SK-N-SH (cell line): ENCODE measurements at regions of chr1 and their contacts with region 1.

Region 1: GRCh38 chr1:22673486-22674409 is 20.7 kb downstream of the C1QB start:
- DNase-seq: peak; percentile 87
- H3K4me3 ChIP-seq: no peak overlapping the region; a peak in 1 of 4 replicates
- H3K27ac ChIP-seq: no peak overlapping the region
- H3K4me1 ChIP-seq: no peaks in the 10 kb centered on the region; a peak in 1 of 4 replicates
- H3K27me3 ChIP-seq: peaks cover 12% of the 10 kb centered on the region; the same call in 1 of the 2 replicates
- CTCF ChIP-seq: peak; percentile 95
- EP300 ChIP-seq: no peak
- RAD21 ChIP-seq: peak; percentile 94

Region 2: DNA sequence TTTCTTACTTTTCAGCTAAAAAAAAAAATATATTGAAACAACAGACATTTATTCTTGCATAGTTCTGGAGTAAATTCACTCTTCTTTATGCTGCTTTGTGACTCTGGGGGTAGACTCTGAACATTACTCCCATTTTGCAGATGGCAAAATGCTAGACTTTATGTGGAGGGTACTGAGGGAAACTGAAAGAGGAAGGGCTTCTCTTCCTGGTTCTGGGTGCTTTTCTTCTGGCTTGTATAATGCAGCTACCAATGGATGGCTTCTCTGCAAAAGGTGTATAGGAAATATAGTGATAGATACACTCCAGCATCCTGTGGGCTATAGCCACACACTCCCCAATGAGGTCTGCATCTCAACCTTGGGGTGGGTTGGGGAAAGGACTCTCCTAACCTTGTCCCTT is 241.8 kb before region 1 on chr1:
- CTCF ChIA-PET with region 1: no interaction called
- POLR2A ChIA-PET with region 1: no interaction called
- DNase-seq: no peak
- H3K4me3 ChIP-seq: no peak overlapping the region
- H3K27ac ChIP-seq: no peak overlapping the region
- H3K4me1 ChIP-seq: no peaks in the 10 kb centered on the region
- H3K27me3 ChIP-seq: 0 out of 2 replicates have a peak, but pooled peaks cover 5% of the 10 kb centered on the region
- CTCF ChIP-seq: no peak
- EP300 ChIP-seq: no peak
- RAD21 ChIP-seq: no peak

Region 3: DNA sequence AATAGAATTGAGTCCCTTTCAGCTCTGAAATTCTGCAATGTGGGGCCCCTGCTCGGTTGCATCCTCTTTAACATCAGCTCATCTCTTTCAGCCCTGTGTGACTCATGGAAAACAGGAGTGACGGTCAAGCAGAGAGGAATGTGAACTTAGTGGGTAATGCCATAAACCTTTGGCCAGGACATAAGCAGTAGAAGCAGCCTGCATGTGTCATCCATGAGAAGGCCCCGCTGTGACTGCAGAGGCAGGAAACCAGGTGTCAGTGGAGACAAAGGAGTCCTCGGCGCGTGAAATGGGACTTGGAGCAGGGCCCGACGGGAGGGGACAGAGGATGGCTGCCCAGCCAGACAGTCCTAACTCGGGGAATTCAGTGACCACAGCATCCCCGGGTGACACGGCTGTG is 15.8 kb after region 1 on chr1:
- CTCF ChIA-PET with region 1: interaction called, 10 read pairs
- POLR2A ChIA-PET with region 1: no interaction called
- DNase-seq: no peak
- H3K4me3 ChIP-seq: no peak overlapping the region
- H3K27ac ChIP-seq: peak overlapping the region in 1 of 2 experiments; percentile 74; a peak in 2 of 4 replicates
- H3K4me1 ChIP-seq: peaks cover 6 to 8% of the 10 kb centered on the region in 2 experiments; a peak in 3 of 4 replicates
- H3K27me3 ChIP-seq: no peaks in the 10 kb centered on the region
- CTCF ChIP-seq: no peak
- EP300 ChIP-seq: peak in 1 of 2 experiments; percentile 70; a peak in 1 of 4 replicates
- RAD21 ChIP-seq: no peak

Region 4: DNA sequence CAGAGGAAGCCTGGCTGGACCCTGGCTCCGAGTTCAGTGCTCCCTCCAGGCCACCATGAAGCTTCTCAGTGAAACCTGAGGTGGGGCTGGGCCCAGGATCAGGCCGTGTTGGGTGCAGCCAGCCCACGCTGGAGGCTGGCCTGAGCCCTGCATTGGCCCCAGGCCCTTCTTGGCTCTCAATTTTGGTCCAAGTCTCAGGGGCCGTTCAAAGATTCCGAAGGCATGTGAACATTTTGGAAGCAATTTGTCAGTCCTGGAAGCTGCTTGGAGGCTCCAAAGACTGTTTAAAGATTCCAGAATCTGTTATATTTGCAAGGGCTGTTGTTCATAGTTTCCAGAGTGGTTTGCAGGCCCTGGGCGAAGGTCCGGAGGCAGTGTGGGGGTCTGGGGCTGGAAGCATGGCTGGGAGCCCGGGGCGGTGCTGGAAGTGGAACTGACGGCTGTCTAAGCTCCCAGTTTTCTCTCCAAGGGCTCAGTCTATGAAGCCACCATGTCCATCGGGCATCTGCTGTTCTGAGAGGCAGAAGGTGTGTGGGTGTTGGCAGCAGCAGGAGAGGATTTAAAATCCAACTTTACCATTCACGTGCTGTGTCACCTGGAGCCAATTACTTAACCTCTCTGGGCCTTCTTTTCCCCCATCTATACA is 141.8 kb after region 1 on chr1:
- CTCF ChIA-PET with region 1: no interaction called
- POLR2A ChIA-PET with region 1: no interaction called
- DNase-seq: no peak
- H3K4me3 ChIP-seq: no peak overlapping the region
- H3K27ac ChIP-seq: no peak overlapping the region; a peak in 1 of 4 replicates
- H3K4me1 ChIP-seq: peaks cover 0 to 53% of the 10 kb centered on the region in 2 experiments; a peak in 1 of 4 replicates
- H3K27me3 ChIP-seq: no peaks in the 10 kb centered on the region
- CTCF ChIP-seq: no peak
- EP300 ChIP-seq: no peak
- RAD21 ChIP-seq: no peak

Region 5: DNA sequence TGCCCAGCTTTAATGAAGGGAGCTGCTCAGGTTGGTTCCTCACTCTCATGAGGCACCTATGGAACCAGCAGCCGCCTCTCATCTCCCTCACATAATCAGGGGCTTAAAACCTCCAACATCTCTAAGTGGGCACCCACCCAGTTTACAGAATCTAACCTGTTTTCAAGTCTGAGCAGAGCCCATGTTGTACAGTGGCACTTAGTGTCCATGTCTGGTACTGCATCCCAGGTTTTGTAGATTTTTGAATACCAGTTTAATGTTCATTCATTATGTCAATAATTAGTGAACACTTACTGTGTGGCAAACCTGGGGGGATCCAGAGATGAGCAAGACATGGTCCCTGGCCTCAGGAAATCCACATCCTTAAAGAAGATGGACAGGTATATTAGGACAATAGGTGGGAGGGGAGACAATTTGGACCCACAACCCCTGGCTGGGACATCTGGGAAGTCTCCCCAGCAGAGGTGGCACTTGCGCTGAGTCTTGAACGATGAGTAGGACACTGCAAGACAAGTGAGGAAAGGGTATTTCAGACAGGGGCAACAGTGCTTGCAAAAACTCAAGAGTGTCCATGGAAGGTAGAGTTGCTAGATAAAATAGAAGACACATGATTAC is 215.6 kb after region 1 on chr1:
- CTCF ChIA-PET with region 1: interaction called, 18 read pairs
- POLR2A ChIA-PET with region 1: no interaction called
- DNase-seq: peak; percentile 75
- H3K4me3 ChIP-seq: no peak overlapping the region
- H3K27ac ChIP-seq: peak overlapping the region in 1 of 2 experiments; percentile 29; a peak in 1 of 4 replicates
- H3K4me1 ChIP-seq: peaks cover 0 to 9% of the 10 kb centered on the region in 2 experiments; a peak in 1 of 4 replicates
- H3K27me3 ChIP-seq: no peaks in the 10 kb centered on the region
- CTCF ChIP-seq: peak; percentile 84
- EP300 ChIP-seq: no peak
- RAD21 ChIP-seq: peak; percentile 85

Region 6: DNA sequence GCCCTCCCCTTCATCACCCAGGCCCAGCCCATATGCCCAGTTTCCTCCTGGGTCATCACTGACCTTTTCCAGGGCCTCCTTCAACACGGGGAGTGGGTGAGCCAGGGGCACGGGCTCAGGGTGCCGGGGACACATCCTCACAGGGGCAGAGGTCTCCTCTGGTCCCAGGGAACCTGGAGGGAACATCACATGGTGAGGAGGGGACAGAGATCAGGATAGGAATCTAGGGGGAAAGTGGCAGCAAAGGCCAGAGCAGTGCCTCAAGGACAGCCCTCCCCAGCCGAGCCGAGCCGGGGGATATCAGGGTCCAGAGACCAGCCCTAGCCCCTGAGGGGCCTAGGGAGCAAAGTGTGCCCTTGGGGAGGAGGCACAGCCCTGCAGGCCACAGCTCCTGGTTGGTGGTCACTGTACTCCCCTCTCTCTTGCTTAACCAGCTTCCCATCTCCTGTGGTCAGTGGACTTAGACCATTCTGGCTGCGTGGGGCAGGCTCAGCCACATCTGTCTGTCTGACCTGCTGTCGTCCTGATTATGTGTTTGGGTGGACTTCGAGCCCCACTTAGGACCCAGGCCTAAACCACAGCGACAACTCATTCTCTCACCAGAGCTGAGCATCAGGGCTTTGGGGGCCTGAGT is 289.4 kb after region 1 on chr1:
- CTCF ChIA-PET with region 1: interaction called, 20 read pairs
- POLR2A ChIA-PET with region 1: no interaction called
- DNase-seq: no peak
- H3K4me3 ChIP-seq: no peak overlapping the region
- H3K27ac ChIP-seq: no peak overlapping the region
- H3K4me1 ChIP-seq: no peaks in the 10 kb centered on the region
- H3K27me3 ChIP-seq: no peaks in the 10 kb centered on the region
- CTCF ChIP-seq: no peak
- EP300 ChIP-seq: no peak
- RAD21 ChIP-seq: no peak

Region 7: DNA sequence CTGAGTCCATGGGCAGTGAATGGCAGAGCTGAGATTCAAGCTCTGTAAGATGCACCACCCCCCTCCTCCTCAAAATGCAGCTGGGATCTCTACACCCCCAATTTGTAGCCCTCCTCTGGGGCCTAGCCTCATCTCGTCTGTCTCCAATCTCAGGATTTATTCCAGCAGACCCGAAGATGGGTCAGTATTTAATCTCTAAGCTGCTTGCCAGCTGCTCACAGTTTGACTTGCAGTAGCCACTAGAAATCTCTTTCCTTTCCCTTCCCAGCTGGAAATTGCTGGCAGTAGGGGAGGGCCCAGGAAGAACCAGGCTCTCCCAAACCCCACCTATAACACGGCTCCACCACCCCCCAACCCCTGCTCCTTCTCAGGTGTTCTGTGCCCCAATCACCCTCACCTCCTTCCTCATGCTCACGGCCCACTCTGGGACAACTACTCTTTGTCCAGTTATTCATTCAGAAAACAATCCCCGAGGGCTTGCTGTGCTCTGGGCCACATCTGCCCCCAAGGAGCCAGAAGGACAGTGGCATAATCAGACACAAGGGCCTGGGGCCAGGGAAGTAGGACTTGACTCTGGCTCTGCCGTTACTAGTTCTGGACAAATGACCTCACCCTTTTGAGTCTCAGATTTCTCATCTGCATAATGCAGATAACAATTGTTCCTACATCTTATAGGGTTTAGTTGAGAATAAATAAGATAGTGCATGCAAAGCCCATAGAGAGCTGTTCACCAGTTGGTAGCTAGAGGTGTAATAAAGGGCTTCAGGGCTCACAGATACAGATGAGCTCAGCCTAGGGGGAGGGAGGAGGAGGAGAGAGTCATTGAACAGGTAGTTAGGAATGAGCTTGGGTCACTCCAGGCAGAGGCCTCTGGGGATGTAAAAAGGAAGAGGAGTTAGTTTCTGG is 297.7 kb after region 1 on chr1:
- CTCF ChIA-PET with region 1: interaction called, 10 read pairs
- POLR2A ChIA-PET with region 1: no interaction called
- DNase-seq: no peak
- H3K4me3 ChIP-seq: no peak overlapping the region
- H3K27ac ChIP-seq: no peak overlapping the region
- H3K4me1 ChIP-seq: peaks cover 13% of the 10 kb centered on the region in 2 experiments; a peak in 3 of 4 replicates
- H3K27me3 ChIP-seq: no peaks in the 10 kb centered on the region
- CTCF ChIP-seq: no peak
- EP300 ChIP-seq: no peak
- RAD21 ChIP-seq: no peak